ENCODE measurements at regions of chr21 and their contacts with region 1.

Region 1: DNA sequence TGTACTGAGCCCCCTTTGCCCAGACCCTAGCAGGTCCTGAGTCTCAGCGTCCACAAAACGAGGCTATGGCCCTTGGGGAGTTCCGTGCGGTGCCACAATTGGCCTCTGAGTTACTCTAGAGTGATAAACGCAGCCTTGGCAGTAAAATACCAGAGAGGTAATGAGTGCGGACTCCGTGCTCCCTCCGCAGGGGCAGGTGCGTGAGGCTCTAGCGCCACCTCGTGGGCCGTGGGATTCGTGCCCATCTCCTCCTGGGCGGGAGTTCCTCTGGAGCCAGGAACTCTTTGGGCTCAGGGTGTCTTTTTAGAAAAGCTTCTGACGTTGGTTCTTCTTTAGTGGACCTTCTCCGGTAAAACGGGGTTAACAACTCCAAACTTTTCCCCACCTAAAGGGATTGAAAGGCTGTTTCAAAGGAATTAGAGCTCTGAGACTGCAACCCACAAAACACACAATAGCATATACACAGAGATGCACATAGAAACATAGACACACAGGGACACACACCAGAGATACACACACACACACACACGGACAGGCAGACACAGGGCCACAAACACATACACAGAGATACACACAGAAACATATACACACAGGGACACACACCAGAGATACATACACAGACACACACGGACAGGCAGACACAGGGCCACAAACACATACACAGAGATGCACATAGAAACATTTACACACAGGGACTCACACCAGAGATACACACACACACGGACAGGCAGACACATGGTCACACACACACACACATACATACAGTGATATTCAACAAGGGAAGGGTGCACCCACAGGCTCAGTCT is 99.4 kb downstream of the KCNJ15 start:
- DNase-seq: peak; percentile 78 to 86
- H3K4me3 ChIP-seq: no peak overlapping the region
- H3K27ac ChIP-seq: no peak overlapping the region
- H3K4me1 ChIP-seq: peaks cover 0 to 20% of the 10 kb centered on the region in 2 donors
- H3K27me3 ChIP-seq: no peaks in the 10 kb centered on the region
- CTCF ChIP-seq: peak; percentile 81 to 97 (median 95)
- POLR2A ChIP-seq: no peak

Region 2: DNA sequence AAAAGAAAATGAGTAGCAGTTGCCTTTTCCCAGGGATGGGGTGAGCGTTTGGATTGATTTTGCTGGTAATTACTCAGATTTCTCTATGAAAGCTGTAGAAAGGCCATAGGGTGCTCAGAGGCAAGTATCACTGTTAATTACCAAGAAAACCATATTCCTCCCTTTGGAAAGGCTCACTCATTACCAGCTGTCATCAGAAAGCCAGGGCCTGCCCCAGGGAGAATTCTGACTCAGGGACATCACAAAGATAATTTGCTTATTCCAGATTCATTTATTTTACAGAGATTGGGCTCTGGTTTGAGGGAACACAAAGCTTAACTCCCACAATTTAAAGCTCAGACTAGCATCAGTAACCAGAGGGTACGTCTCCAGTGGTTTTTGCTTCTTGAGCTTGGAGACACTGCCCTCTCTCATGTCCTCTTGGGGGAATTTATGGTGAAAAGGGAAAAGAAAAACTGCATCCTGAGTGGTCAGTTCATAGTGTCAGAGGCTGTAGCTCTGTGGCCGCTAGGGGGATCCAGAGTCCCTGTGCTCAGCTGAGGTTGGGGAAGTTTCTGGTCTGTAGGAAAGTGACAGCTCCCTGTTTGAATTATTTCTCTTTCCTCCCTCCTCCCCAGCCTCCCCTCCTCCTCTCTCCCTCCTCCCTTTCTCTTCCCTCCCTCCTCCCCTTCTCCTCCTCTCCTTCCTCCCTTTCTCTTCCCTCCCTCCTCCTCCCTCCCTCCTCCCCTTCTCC is 644.2 kb before region 1 on chr21:
- intact Hi-C with region 1: loop called (anchors 10 kb)
- DNase-seq: peak; percentile 57 to 62
- H3K4me3 ChIP-seq: no peak overlapping the region
- H3K27ac ChIP-seq: no peak overlapping the region
- H3K4me1 ChIP-seq: no peaks in the 10 kb centered on the region
- H3K27me3 ChIP-seq: no peaks in the 10 kb centered on the region
- CTCF ChIP-seq: peak; percentile 56 to 77 (median 64)
- POLR2A ChIP-seq: no peak

Region 3: DNA sequence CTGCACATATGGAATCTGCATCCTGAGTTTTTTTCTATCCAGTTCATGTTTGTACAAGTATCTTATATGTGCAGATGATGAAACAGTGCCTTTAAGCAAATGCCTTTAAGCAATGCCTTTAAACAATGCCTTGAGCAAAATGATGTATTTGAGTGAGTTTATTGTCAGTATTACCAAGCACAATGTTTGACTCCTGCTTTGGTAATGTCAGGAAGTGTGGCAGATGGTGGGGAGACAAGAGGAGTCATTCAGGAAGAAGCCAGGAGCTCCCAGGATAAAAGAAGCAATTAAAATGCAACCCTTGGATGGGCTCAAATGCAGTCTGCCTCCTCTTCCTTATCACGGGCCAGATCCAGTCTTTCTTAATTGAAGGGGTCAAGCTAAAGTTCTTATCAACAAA is 208.1 kb before region 1 on chr21:
- intact Hi-C with region 1: no loop called
- DNase-seq: no peak
- H3K4me3 ChIP-seq: no peak overlapping the region
- H3K27ac ChIP-seq: no peak overlapping the region
- H3K4me1 ChIP-seq: no peaks in the 10 kb centered on the region
- H3K27me3 ChIP-seq: no peaks in the 10 kb centered on the region
- CTCF ChIP-seq: no peak
- POLR2A ChIP-seq: no peak

Region 4: DNA sequence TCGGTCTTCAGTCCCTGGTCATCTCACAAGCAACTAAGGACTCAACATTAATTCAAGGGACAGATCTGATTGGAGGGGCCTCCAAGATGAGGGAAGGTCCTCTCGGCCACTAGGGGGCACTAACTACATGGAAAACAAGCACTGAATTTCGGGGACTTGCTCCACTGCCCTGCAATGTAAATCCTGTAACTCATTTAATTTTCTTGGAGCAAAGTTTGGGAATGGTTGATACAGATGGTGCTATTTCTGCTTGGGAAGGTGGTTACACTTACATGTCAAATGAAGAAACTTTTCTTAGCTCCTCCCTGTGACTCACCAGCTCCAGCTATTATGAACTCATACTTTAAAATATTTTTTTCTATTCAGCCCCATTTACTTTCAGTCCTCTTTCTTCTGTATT is 196.8 kb before region 1 on chr21:
- intact Hi-C with region 1: loop called (anchors 2 kb)
- DNase-seq: peak; percentile 70 to 77
- H3K4me3 ChIP-seq: no peak overlapping the region
- H3K27ac ChIP-seq: no peak overlapping the region
- H3K4me1 ChIP-seq: no peaks in the 10 kb centered on the region
- H3K27me3 ChIP-seq: no peaks in the 10 kb centered on the region
- CTCF ChIP-seq: peak; percentile 40 to 86 (median 82)
- POLR2A ChIP-seq: no peak

Region 5: GRCh38 chr21:38219049-38219628 is 137.1 kb before region 1 on chr21:
- intact Hi-C with region 1: loop called (anchors 2 kb)
- DNase-seq: peak; percentile 72 to 80
- H3K4me3 ChIP-seq: no peak overlapping the region
- H3K27ac ChIP-seq: peak overlapping the region; percentile 7 to 57 (median 47)
- H3K4me1 ChIP-seq: peaks cover 0 to 9% of the 10 kb centered on the region in 2 donors
- H3K27me3 ChIP-seq: no peaks in the 10 kb centered on the region
- CTCF ChIP-seq: peak; percentile 89 to 99 (median 97)
- POLR2A ChIP-seq: no peak

Region 6: GRCh38 chr21:38660333-38661196 is 304.4 kb after region 1 on chr21:
- intact Hi-C with region 1: no loop called
- DNase-seq: peak in 1 of 2 donors; percentile 6
- H3K4me3 ChIP-seq: peak overlapping the region in 2 of 3 donors; percentile 24 to 40
- H3K27ac ChIP-seq: peak overlapping the region in 2 of 3 donors; percentile 31 to 47
- H3K4me1 ChIP-seq: peaks cover 0 to 17% of the 10 kb centered on the region in 2 donors
- H3K27me3 ChIP-seq: no peaks in the 10 kb centered on the region
- CTCF ChIP-seq: no peak
- POLR2A ChIP-seq: no peak

Measured in thyroid gland (tissue), 4 donors.